HCT116 (cell line): ENCODE measurements at regions of chr12 and their contacts with region 1.

Region 1: DNA sequence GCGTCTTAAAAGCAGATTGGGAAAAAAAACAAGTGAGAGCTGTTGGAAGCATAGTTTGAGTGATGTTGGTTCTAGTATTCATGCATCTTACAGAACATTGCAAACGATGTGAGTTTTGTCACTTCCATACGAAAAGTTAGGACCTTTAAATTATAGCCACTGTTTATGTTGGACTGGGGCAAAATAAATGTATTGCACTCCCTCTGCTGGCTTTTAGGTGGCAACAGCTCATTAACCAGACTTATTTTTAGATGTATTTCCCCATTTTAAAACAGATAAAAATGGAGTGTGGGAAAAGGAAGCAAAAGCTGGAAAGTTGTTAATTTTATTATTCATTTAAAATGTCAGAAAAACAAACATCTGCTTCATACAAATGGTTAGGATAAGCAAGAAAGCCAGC is 111.9 kb downstream of the LGR5 start:
- DNase-seq: peak; percentile 7
- ATAC-seq: peak; percentile 60
- H3K4me3 ChIP-seq: no peak overlapping the region
- H3K27ac ChIP-seq: no peak overlapping the region
- H3K4me1 ChIP-seq: peaks cover under 1 to 3% of the 10 kb centered on the region in 2 experiments; a peak in 3 of 4 replicates
- H3K27me3 ChIP-seq: no peaks in the 10 kb centered on the region
- CTCF ChIP-seq: peak; percentile 33 to 61 (median 59); a peak in 5 of 6 replicates
- POLR2A ChIP-seq: no peak
- RAD21 ChIP-seq: peak; percentile 77

Region 2: DNA sequence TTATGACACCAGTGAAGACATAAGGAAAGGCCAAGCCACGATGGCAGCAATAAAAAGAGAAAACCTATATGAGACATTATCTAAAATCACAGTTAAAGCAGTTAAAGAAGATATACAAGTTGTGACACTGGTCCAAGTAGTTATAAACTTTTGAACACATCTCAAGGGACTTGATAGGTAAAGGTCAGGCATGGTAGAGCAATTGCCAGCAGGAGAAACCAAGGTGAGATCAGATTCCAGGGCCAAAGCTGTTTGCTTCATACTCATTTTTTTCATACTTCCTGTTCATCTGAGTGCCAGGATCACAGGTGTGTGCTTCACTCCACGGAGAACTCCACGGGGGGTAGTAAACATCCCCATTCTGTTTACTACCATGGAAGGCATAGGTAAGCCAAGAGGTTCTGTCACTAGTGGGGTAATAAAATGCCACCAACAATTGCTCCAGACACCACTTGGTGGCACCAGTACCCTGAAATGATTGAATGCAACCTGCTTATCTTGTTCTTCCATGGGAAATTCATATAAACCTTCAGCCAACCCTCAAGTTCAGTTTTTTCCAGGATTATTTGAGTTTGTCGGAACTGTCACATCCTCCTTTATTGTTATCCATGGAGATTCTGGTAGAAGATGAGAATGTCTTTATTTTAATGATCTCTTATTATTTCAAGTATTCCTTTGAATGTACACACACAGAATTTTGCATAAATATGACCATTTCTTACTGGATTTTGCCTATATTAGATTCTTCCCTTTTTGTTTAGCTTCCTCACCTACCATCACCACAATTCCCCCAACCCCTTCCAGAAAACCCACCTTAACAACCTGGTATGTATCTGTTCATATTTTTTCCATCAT is 334.6 kb before region 1 on chr12:
- CTCF ChIA-PET with region 1: interaction called, 9 read pairs
- POLR2A ChIA-PET with region 1: no interaction called
- RAD21 ChIA-PET with region 1: no interaction called
- intact Hi-C with region 1: loop called (anchors 1 kb)
- DNase-seq: peak; percentile 55
- ATAC-seq: peak; percentile 84
- H3K4me3 ChIP-seq: no peak overlapping the region
- H3K27ac ChIP-seq: no peak overlapping the region
- H3K4me1 ChIP-seq: no peaks in the 10 kb centered on the region
- H3K27me3 ChIP-seq: no peaks in the 10 kb centered on the region
- CTCF ChIP-seq: peak; percentile 59 to 70 (median 70); a peak in 5 of 6 replicates
- POLR2A ChIP-seq: no peak
- RAD21 ChIP-seq: peak; percentile 81

Region 3: DNA sequence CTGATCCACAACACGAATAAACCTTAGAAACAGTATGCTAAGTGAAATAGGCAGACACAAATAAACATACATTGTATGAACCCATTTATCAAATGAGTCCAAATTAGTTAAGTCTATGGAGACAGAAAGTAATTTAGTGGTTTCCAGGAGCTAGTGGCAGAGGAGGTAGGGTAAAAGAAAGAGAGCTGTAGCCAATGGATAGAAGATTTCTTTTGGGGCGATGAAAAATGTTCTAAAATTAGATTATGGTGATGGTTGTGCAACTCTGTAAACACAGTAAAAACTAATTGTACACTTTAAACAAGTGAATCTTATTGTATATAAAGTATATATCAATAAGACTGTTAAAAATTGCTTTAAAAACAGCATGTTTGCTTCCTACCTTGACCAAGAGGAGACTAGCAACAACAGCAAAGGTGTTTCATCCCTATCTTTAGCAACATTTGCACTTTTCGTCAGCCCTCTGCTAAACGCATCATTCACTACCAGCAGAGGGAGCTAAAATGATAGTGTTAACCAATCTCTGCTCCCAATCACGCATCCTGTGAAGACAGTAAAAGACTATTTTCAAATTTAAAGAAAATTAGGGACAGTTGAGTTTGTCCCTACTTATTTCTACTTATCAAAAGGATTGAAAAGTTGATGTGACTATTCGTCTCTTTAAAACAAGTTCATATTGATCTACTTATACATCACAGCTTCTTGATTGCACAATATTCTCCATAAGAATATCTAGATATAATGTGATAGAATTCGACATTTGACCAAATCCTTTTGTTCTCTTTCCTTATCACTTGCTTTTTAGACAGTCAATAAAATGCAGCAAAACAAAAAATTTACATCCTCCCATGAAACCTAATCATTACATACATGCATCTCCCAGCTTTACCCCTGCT is 135.9 kb before region 1 on chr12:
- CTCF ChIA-PET with region 1: interaction called, 17 read pairs
- POLR2A ChIA-PET with region 1: no interaction called
- RAD21 ChIA-PET with region 1: no interaction called
- intact Hi-C with region 1: loop called (anchors 1 kb)
- DNase-seq: peak; percentile 42
- ATAC-seq: peak; percentile 90
- H3K4me3 ChIP-seq: no peak overlapping the region
- H3K27ac ChIP-seq: no peak overlapping the region
- H3K4me1 ChIP-seq: no peaks in the 10 kb centered on the region
- H3K27me3 ChIP-seq: no peaks in the 10 kb centered on the region
- CTCF ChIP-seq: peak; percentile 79 to 86 (median 81)
- POLR2A ChIP-seq: no peak
- RAD21 ChIP-seq: peak; percentile 87

Region 4: DNA sequence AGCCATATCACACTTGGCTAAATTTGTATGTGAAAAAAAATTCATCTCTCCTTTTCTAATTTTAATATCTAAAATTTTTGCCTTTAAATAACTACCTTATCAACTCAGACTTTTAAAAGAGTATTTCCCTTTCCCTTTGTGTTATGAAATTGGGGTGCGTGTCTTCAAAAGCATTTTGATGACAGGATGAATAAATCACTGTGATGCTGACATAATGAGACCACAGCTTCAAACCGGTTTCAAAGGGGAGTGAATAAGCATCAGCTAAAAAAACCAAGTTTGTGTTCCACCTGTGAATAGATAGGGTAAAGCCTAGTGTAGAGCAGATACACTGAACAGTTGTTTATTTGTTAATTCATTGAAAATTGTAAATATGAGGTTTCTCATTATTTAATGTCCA is 26.9 kb before region 1 on chr12:
- CTCF ChIA-PET with region 1: no interaction called
- POLR2A ChIA-PET with region 1: no interaction called
- RAD21 ChIA-PET with region 1: no interaction called
- intact Hi-C with region 1: no loop called
- DNase-seq: no peak
- ATAC-seq: no peak
- H3K4me3 ChIP-seq: no peak overlapping the region
- H3K27ac ChIP-seq: no peak overlapping the region
- H3K4me1 ChIP-seq: no peaks in the 10 kb centered on the region
- H3K27me3 ChIP-seq: no peaks in the 10 kb centered on the region
- CTCF ChIP-seq: no peak
- POLR2A ChIP-seq: no peak
- RAD21 ChIP-seq: no peak